ENCODE measurements at regions of chr17 and their contacts with region 1.

Region 1: DNA sequence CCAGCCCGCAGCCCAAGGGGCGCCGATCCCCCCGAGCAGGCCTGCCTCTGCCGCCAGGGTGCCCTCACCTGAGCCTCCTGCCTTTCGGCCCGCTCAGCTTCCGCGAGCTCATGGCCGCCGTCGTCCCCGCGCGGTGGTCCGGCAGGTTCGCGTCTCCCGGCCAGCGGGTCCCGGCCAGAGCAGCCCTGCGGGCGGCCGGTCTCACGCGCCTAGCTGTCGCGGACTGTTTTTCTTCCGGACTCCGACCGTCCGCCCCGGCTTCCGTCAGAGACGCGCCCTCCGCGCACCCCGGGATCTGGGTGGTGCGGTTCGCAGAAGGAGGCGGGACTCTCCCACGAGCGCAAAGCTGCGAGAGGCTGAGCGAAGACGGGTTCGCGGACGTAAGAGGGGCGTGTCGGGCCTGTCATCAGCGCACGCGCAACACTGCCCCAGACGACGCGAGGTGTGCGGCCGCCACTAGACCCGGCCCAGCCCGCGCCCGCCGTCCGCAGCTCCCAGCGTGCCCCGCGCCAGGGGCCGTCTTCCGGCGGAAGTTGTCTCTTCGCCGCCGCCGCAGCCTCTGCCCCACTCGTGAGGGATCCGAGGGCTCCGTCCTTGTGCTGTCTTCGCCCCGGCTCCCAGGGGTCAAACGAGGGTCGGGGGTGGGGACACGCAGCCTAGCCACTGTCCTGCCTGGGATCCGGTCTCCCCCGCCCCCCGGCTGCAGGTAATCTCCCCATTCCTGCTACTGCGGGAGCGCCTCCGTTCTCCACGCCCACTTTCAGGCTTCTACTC is at the start of gene INPP5K:
- DNase-seq: peak; percentile 100
- H3K4me3 Mint-ChIP-seq: peak within 1 kb of the TSS; percentile 88
- H3K27ac Mint-ChIP-seq: peak within 1 kb of the TSS; percentile 84
- H3K4me1 Mint-ChIP-seq: peaks cover 17% of the 10 kb centered on the region
- H3K27me3 Mint-ChIP-seq: no peaks in the 10 kb centered on the region
- total RNA-seq, gene INPP5K: 19.1 and 21.0 TPM in 2 replicates

Region 2: DNA sequence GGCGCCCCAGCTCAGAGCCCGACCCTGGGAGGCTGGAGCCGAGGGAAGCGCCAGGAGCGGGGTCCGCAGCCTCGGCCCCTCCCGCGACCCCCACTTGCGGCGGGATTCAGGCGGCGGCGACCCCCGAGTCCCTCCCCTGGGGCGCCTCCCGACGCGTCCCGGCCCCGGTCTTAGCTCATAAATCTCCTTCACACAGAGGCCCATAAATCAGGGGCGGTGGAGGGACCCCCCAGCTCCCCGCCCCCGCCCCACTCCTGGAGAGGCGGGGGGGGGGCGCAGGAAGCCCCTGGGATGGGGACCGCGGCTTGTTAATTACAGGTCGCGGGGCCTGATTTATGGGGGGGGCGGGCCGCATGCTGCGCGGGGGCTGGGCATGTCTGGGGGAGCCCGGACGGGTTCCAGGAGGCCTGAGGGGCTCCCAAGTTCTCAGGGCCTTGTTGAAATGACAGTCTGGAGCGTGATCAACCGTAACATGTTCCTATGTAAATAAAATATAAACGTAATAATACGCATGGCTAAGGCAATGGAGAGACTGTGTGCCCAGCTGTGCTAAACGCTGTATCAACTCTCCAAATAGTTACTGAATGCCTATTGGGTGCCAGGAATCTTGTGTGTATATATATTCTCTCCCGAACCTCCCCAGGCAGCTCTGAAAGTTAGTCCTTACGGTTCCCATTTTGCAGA is 256.3 kb before region 1 on chr17:
- intact Hi-C with region 1: loop called (anchors 2 kb)
- DNase-seq: no peak
- H3K4me3 Mint-ChIP-seq: peak overlapping the region; percentile 24
- H3K27ac Mint-ChIP-seq: no peak overlapping the region
- H3K4me1 Mint-ChIP-seq: peaks cover 18% of the 10 kb centered on the region
- H3K27me3 Mint-ChIP-seq: peaks cover 43% of the 10 kb centered on the region

Region 3: DNA sequence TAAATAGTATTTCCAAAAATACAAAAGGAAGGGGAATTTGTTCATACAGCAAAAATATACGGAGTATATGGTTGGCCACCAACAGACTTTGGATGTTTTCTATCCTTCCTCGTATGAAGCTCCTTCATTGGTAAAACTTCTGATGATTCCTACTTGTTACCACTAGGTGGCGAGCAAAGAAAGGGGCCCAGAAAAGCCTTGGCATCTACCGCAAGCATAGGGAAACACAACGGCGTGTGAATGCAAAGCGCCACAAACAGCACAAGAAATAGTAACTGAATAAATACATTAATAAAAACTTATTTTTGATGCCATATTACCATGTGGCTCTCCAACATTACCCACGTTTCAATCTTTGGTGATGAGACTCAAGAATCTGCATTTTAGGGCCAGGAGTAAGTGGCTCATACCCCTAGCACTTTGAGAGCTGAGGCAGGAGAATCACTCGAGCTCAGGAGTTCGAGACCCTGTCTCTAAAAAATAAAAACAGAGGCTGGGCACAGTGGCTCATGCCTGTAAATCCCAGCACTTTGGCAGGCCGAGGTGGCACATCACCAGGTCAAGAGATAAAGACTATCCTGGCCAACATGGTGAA is 151.0 kb before region 1 on chr17:
- intact Hi-C with region 1: loop called (anchors 1 kb)
- DNase-seq: peak; percentile 88
- H3K4me3 Mint-ChIP-seq: no peak overlapping the region
- H3K27ac Mint-ChIP-seq: no peak overlapping the region
- H3K4me1 Mint-ChIP-seq: peaks cover 40% of the 10 kb centered on the region
- H3K27me3 Mint-ChIP-seq: no peaks in the 10 kb centered on the region

Region 4: GRCh38 chr17:1455797-1456599 is 60.6 kb before region 1 on chr17 and contains the start of gene CRK:
- intact Hi-C with region 1: loop called (anchors 1 kb)
- DNase-seq: peak; percentile 100
- H3K4me3 Mint-ChIP-seq: peak within 1 kb of the TSS; percentile 91
- H3K27ac Mint-ChIP-seq: peak within 1 kb of the TSS; percentile 91
- H3K4me1 Mint-ChIP-seq: peaks cover 24% of the 10 kb centered on the region
- H3K27me3 Mint-ChIP-seq: peaks cover 14% of the 10 kb centered on the region
- total RNA-seq, gene CRK: 22.5 and 24.3 TPM in 2 replicates

Region 5: GRCh38 chr17:1561400-1562175 is 45.0 kb after region 1 on chr17:
- intact Hi-C with region 1: loop called (anchors 1 kb)
- DNase-seq: peak; percentile 83
- H3K4me3 Mint-ChIP-seq: peak overlapping the region; percentile 91
- H3K27ac Mint-ChIP-seq: peak overlapping the region; percentile 68
- H3K4me1 Mint-ChIP-seq: peaks cover 30% of the 10 kb centered on the region
- H3K27me3 Mint-ChIP-seq: peaks cover 7% of the 10 kb centered on the region